Heart right ventricle (tissue), 16 donors: ENCODE measurements at regions of chr22 and their contacts with region 1.

Region 1: DNA sequence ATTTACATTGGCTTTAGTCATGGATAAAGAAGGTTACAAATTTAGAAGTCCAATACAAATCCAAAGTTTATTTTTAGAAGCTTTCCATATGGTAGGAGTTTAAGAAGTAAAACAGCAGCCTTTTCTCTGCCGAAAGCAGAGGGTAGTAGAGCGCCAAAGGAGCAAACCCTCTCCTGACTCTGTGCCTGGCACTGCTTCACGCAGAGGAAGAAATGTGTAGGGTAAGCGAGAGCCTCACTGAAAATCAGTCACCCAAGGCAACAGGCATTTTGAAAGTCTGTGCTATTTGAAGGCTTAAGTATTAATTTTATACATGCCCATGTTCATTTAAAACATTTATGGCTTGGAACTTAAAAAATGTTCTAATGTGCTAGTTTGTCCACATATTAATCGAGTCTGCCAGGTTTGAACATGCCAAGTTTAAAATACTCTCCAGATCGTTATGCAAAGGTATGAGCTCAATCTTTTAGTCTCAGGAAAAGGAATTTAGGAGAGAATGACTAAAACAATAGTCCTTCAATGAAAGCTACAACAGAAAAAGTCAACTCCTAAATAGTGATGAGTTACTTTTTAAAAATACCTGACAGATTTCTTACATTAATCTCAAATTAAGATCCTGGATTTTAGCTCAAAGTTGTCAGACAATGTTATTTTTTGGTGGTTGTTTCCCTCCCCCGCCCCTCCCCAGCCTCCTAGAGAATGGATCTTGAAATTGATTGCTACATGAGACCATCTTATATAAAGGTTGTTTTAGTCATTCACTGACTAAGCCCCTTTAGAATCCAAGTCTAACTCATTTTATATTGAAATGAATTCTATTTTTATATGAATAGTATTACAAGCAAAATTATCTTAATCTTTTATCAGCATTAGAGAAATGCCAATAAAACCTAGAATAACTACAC is 38.7 kb downstream of the MRTFA start:
- DNase-seq: no peak
- ATAC-seq: peak in 2 of 8 donors; percentile 39 to 46
- H3K4me3 ChIP-seq: no peak overlapping the region
- H3K27ac ChIP-seq: no peak overlapping the region
- H3K4me1 ChIP-seq: peaks cover 3 to 85% (median 64%) of the 10 kb centered on the region in 9 donors
- H3K27me3 ChIP-seq: no peaks in the 10 kb centered on the region
- CTCF ChIP-seq: peak in 2 of 9 donors; percentile 5 to 18

Region 2: GRCh38 chr22:40509401-40510134 is 88.2 kb before region 1 on chr22:
- intact Hi-C with region 1: loop called in 1 of 10 experiments (anchors 10 kb)
- DNase-seq: peak in 1 of 2 donors; percentile 78
- ATAC-seq: peak; percentile 68 to 89 (median 80)
- H3K4me3 ChIP-seq: no peak overlapping the region
- H3K27ac ChIP-seq: peak overlapping the region; percentile 43 to 90 (median 83)
- H3K4me1 ChIP-seq: peaks cover 23 to 89% (median 65%) of the 10 kb centered on the region in 9 donors
- H3K27me3 ChIP-seq: no peaks in the 10 kb centered on the region
- CTCF ChIP-seq: no peak

Region 3: GRCh38 chr22:40628354-40629042 is 30.7 kb after region 1 on chr22:
- intact Hi-C with region 1: loop called in 1 of 10 experiments (anchors 5 kb)
- DNase-seq: no peak
- ATAC-seq: peak in 1 of 8 donors; percentile 54
- H3K4me3 ChIP-seq: no peak overlapping the region
- H3K27ac ChIP-seq: peak overlapping the region in 1 of 10 donors; percentile 1
- H3K4me1 ChIP-seq: peaks cover 0 to 75% (median 32%) of the 10 kb centered on the region in 9 donors
- H3K27me3 ChIP-seq: no peaks in the 10 kb centered on the region
- CTCF ChIP-seq: no peak